ENCODE measurements at regions of chr22 and their contacts with region 1.

Region 1: GRCh38 chr22:20258584-20259326 is 9.4 kb downstream of the RTN4R start:
- DNase-seq: no peak
- H3K4me3 ChIP-seq: no peak overlapping the region
- H3K27ac ChIP-seq: no peak overlapping the region
- H3K4me1 ChIP-seq: no peaks in the 10 kb centered on the region
- H3K27me3 ChIP-seq: no peaks in the 10 kb centered on the region
- CTCF ChIP-seq: no peak

Region 2: GRCh38 chr22:20164863-20165262 is 93.9 kb before region 1 on chr22:
- intact Hi-C with region 1: loop called (anchors 5 kb)
- DNase-seq: no peak
- H3K4me3 ChIP-seq: no peak overlapping the region
- H3K27ac ChIP-seq: no peak overlapping the region
- H3K4me1 ChIP-seq: no peaks in the 10 kb centered on the region
- H3K27me3 ChIP-seq: peaks cover 0 to 20% of the 10 kb centered on the region in 2 donors
- CTCF ChIP-seq: no peak